ENCODE measurements at regions of chr17 and their contacts with region 1.

Region 1: DNA sequence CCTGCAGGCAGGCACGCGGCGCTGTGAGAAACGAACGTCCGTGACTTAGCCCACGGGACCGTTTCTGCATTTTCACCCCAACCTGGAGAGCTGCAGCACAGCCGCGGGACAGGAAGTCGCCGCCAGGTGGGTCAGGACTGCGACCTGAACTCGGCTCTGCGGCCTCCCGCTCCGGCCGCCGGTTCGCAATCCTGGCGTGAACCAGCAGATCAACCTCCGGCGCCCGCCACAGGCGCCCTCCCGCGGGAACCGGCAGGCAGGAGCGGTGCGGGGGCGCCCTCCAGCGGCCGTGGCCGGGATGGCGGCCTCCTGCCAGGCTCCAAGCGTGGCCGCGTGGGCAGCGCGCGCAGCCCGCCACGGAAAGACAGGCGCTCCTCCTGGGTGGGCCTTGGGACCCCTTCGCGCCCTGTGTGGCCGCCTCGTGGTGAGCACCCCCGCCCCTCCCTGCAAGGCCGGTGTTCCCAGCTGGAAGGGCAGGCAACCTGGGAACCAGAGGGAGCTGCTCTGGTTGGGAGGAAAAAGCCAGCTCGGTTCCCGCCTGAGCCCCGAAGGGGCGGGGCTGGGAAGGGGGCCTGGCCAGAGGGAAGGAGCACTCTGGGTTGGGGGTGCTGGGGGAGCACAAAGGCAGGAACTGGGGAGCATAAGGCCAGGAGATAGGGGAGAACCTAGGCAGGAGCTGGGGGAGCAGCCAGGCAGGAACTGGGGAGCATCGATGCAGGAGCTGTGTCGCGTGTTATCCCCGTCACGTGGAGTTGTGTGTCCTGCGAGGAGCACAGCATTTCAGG is 28.2 kb downstream of the ACTG1 start:
- DNase-seq: peak; percentile 94
- ATAC-seq: peak; percentile 67
- H3K4me3 Mint-ChIP-seq: peak overlapping the region; percentile 19
- H3K27ac Mint-ChIP-seq: no peak overlapping the region
- H3K4me1 Mint-ChIP-seq: peaks cover 25% of the 10 kb centered on the region
- H3K27me3 Mint-ChIP-seq: peaks cover 11% of the 10 kb centered on the region
- CTCF ChIP-seq: peak; percentile 70

Region 2: GRCh38 chr17:81067391-81067811 is 417.0 kb before region 1 on chr17:
- CTCF ChIA-PET with region 1: no interaction called
- POLR2A ChIA-PET with region 1: no interaction called
- intact Hi-C with region 1: no loop called
- DNase-seq: no peak
- ATAC-seq: no peak
- H3K4me3 Mint-ChIP-seq: no peak overlapping the region
- H3K27ac Mint-ChIP-seq: no peak overlapping the region
- H3K4me1 Mint-ChIP-seq: no peaks in the 10 kb centered on the region
- H3K27me3 Mint-ChIP-seq: no peaks in the 10 kb centered on the region
- CTCF ChIP-seq: no peak

Region 3: GRCh38 chr17:81142301-81143199 is 341.8 kb before region 1 on chr17:
- CTCF ChIA-PET with region 1: interaction called, 6 read pairs
- POLR2A ChIA-PET with region 1: no interaction called
- intact Hi-C with region 1: loop called (anchors 1 kb)
- DNase-seq: peak; percentile 58
- ATAC-seq: peak; percentile 92
- H3K4me3 Mint-ChIP-seq: no peak overlapping the region
- H3K27ac Mint-ChIP-seq: no peak overlapping the region
- H3K4me1 Mint-ChIP-seq: no peaks in the 10 kb centered on the region
- H3K27me3 Mint-ChIP-seq: peaks cover 3% of the 10 kb centered on the region
- CTCF ChIP-seq: no peak

Region 4: DNA sequence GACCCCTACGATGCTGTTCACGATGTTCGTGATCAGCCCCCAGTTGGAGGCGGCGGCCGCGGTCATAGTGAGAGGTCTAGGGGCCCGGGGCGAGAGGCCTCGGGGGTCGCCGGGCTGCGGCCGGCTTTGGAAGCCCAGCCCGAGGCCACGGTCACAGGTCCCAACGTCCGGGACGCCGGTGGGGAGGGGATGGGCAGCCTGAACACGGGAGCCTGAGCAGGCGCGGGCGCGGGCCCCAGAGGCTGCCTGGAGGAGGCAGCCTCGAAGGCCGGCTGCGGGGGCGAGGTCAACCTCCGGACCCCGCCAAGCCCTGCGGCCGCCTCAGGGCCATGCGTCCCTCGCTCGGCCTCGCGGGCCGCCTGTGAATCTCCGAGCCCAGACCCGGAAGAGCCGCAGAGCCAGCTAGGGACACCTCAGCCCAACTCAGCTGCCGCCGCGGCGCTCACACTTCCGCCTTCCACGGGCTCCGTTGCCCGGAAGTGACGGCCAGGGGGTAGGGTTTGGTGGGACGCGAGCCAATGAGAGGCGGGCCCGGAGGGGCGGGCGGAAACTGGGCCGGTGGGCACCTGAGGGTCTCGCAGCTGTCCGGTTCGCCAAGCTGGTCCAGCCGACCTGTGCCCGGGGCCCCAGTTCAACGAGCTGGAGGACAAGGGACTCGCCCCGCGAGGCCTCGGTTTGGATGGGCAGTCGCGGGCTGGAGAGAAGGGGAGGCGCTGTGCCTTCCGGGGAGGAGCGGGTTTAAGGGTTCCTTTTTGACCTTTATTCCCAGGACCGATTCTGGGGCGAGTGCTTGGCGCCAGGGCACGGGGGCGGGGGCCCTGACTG is 189.3 kb before region 1 on chr17 and contains the start of gene SLC38A10:
- CTCF ChIA-PET with region 1: interaction called, 43 read pairs
- POLR2A ChIA-PET with region 1: interaction called, 15 read pairs
- intact Hi-C with region 1: loop called (anchors 1 kb)
- DNase-seq: peak; percentile 92
- ATAC-seq: peak; percentile 86
- H3K4me3 Mint-ChIP-seq: peak within 1 kb of the TSS; percentile 95
- H3K27ac Mint-ChIP-seq: peak within 1 kb of the TSS; percentile 92
- H3K4me1 Mint-ChIP-seq: peaks cover 39% of the 10 kb centered on the region
- H3K27me3 Mint-ChIP-seq: no peaks in the 10 kb centered on the region
- CTCF ChIP-seq: no peak
- total RNA-seq, gene SLC38A10: 75.9 and 97.1 TPM in 2 replicates

Region 5: DNA sequence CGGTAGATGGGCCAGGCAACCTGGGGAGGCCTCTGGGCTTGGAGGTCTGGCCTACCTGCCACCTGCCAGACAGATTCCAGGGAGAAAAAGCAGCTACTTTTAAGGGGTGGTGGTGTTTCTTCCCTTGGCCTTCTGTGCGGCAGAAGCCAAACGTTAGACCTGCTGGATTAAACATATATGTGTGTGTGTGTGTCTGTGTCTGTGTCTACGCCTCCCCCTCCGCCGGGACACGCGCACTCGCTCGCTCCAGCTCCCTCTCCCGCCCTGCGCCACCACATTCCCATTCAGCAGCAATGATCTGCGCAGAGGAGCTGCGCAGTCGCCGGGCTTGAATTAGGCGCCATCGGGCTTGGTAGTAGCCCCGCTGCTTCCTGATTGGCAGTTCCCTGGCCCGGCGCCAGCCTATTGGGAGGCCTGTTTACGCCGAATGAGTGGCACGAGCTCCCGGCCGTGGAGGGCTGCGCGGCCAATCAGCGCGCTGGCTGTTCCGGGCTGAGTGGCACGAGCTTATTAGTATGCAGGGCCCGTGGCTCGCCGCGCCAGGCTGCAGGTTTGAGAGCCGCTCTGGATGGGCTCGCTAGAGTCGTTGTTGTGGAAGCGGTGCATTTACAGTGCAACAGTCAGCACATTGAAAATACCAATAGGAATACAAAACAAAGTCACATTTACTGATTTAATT is 89.3 kb before region 1 on chr17 and contains the start of gene BAHCC1:
- CTCF ChIA-PET with region 1: interaction called, 6 read pairs
- POLR2A ChIA-PET with region 1: no interaction called
- intact Hi-C with region 1: loop called (anchors 2 kb)
- DNase-seq: peak; percentile 70
- ATAC-seq: peak; percentile 92
- H3K4me3 Mint-ChIP-seq: peak within 1 kb of the TSS; percentile 75
- H3K27ac Mint-ChIP-seq: peak within 1 kb of the TSS; percentile 76
- H3K4me1 Mint-ChIP-seq: peaks cover 26% of the 10 kb centered on the region
- H3K27me3 Mint-ChIP-seq: peaks cover 41% of the 10 kb centered on the region
- CTCF ChIP-seq: no peak
- total RNA-seq, gene BAHCC1: 0.13 and 0.42 TPM in 2 replicates

Region 6: GRCh38 chr17:81553018-81553615 is 68.7 kb after region 1 on chr17:
- CTCF ChIA-PET with region 1: no interaction called
- POLR2A ChIA-PET with region 1: interaction called, 11 read pairs
- intact Hi-C with region 1: loop called (anchors 1 kb)
- DNase-seq: no peak
- ATAC-seq: peak; percentile 71
- H3K4me3 Mint-ChIP-seq: peak overlapping the region; percentile 91
- H3K27ac Mint-ChIP-seq: peak overlapping the region; percentile 92
- H3K4me1 Mint-ChIP-seq: peaks cover 45% of the 10 kb centered on the region
- H3K27me3 Mint-ChIP-seq: no peaks in the 10 kb centered on the region
- CTCF ChIP-seq: no peak

Region 7: DNA sequence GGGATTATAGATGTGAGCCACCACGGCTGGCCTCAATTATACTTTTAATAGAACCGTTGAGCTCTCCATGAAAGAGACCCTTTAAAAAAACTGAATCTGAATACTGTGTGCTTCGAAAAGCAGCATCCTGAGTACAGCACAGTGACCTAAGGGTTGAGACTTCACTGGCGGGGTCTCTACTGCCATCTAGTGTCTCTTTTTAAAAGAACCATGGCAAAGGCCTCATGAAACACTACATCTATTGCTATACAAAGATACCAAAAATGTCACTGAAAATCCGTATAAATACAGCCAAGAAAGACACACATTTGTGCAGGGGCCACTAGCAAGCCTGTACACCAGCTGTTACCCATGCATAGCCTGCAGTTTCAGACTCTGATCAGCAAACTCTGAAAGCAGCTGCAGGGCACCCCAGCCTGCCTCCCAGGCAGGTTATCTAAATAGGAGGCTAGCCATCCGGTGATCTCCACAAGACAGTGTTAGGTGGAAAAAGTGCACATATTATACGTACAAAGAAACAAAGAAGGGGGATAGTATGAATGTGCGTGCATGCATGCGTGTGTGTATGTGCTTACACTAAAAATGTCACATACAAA is 117.2 kb after region 1 on chr17:
- CTCF ChIA-PET with region 1: interaction called, 10 read pairs
- POLR2A ChIA-PET with region 1: interaction called, 7 read pairs
- intact Hi-C with region 1: loop called (anchors 1 kb)
- DNase-seq: no peak
- ATAC-seq: peak; percentile 63
- H3K4me3 Mint-ChIP-seq: no peak overlapping the region
- H3K27ac Mint-ChIP-seq: peak overlapping the region; percentile 57
- H3K4me1 Mint-ChIP-seq: peaks cover 46% of the 10 kb centered on the region
- H3K27me3 Mint-ChIP-seq: no peaks in the 10 kb centered on the region
- CTCF ChIP-seq: peak; percentile 19

Measured in activated B cell treated with CpG ODN at 0.5 μM for 24 hours (primary cell).